ENCODE measurements at regions of chr5 and their contacts with region 1.

Region 1: GRCh38 chr5:154701110-154701572 is 54.0 kb upstream of the LARP1 start:
- DNase-seq: no peak
- H3K4me3 ChIP-seq: no peak overlapping the region
- H3K27ac ChIP-seq: no peak overlapping the region
- H3K4me1 ChIP-seq: peaks cover 5 to 21% (median 14%) of the 10 kb centered on the region in 4 experiments
- H3K27me3 ChIP-seq: no peaks in the 10 kb centered on the region
- CTCF ChIP-seq: no peak
- EP300 ChIP-seq: no peak
- POLR2A ChIP-seq: no peak
- RAD21 ChIP-seq: no peak

Region 2: GRCh38 chr5:154276973-154277331 is 424.2 kb before region 1 on chr5:
- CTCF ChIA-PET with region 1: no interaction called
- POLR2A ChIA-PET with region 1: no interaction called
- DNase-seq: no peak
- H3K4me3 ChIP-seq: no peak overlapping the region
- H3K27ac ChIP-seq: no peak overlapping the region
- H3K4me1 ChIP-seq: no peaks in the 10 kb centered on the region
- H3K27me3 ChIP-seq: no peaks in the 10 kb centered on the region
- CTCF ChIP-seq: no peak
- EP300 ChIP-seq: no peak
- POLR2A ChIP-seq: no peak
- RAD21 ChIP-seq: no peak

Region 3: GRCh38 chr5:154534457-154535050 is 166.6 kb before region 1 on chr5:
- CTCF ChIA-PET with region 1: no interaction called
- POLR2A ChIA-PET with region 1: no interaction called
- DNase-seq: peak in 1 of 2 experiments; percentile 39
- H3K4me3 ChIP-seq: no peak overlapping the region
- H3K27ac ChIP-seq: no peak overlapping the region
- H3K4me1 ChIP-seq: no peaks in the 10 kb centered on the region
- H3K27me3 ChIP-seq: no peaks in the 10 kb centered on the region
- CTCF ChIP-seq: no peak
- EP300 ChIP-seq: no peak
- POLR2A ChIP-seq: no peak
- RAD21 ChIP-seq: no peak

Region 4: GRCh38 chr5:154683101-154683880 is 17.9 kb before region 1 on chr5:
- CTCF ChIA-PET with region 1: interaction called, 10 read pairs
- POLR2A ChIA-PET with region 1: interaction called, 9 read pairs
- DNase-seq: no peak
- H3K4me3 ChIP-seq: peak overlapping the region; percentile 34 to 58 (median 48)
- H3K27ac ChIP-seq: peak overlapping the region; percentile 75; the same call in 1 of the 2 replicates
- H3K4me1 ChIP-seq: peaks cover 0 to 3% (median under 1%) of the 10 kb centered on the region in 4 experiments; a peak in 1 of 7 replicates
- H3K27me3 ChIP-seq: no peaks in the 10 kb centered on the region
- CTCF ChIP-seq: no peak
- EP300 ChIP-seq: no peak
- POLR2A ChIP-seq: no peak
- RAD21 ChIP-seq: no peak

Region 5: GRCh38 chr5:154714266-154714986 is 13.3 kb after region 1 on chr5:
- CTCF ChIA-PET with region 1: interaction called, 13 read pairs
- POLR2A ChIA-PET with region 1: interaction called, 27 read pairs
- DNase-seq: no peak
- H3K4me3 ChIP-seq: no peak overlapping the region
- H3K27ac ChIP-seq: no peak overlapping the region
- H3K4me1 ChIP-seq: peaks cover 12 to 33% (median 24%) of the 10 kb centered on the region in 4 experiments
- H3K27me3 ChIP-seq: no peaks in the 10 kb centered on the region
- CTCF ChIP-seq: no peak
- EP300 ChIP-seq: no peak
- POLR2A ChIP-seq: no peak
- RAD21 ChIP-seq: no peak

Region 6: DNA sequence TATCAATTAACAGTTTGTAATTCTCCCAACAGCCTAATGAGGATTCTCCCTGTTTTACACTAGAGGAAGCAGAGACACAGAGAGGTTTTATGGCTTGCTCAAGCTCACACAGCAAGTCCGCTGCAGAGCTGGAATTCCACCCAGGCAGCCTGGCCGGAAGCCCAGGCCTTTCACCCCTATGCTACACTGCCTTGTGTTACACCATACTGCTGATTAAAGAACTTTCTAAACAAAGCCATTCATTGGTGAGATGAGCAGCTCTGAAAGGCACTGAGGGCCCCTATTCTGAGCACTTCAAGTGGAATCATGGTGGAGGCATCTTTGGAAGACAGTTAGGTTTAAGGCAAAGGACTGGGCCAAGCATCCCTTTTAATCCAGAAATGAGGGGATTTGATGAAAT is 39.3 kb after region 1 on chr5:
- CTCF ChIA-PET with region 1: no interaction called
- POLR2A ChIA-PET with region 1: no interaction called
- DNase-seq: no peak
- H3K4me3 ChIP-seq: no peak overlapping the region
- H3K27ac ChIP-seq: no peak overlapping the region
- H3K4me1 ChIP-seq: peaks cover 0 to 6% (median 1%) of the 10 kb centered on the region in 4 experiments; a peak in 4 of 7 replicates
- H3K27me3 ChIP-seq: no peaks in the 10 kb centered on the region
- CTCF ChIP-seq: no peak
- EP300 ChIP-seq: no peak
- POLR2A ChIP-seq: no peak
- RAD21 ChIP-seq: no peak